ENCODE measurements at regions of chr1 and their contacts with region 1.

Region 1: DNA sequence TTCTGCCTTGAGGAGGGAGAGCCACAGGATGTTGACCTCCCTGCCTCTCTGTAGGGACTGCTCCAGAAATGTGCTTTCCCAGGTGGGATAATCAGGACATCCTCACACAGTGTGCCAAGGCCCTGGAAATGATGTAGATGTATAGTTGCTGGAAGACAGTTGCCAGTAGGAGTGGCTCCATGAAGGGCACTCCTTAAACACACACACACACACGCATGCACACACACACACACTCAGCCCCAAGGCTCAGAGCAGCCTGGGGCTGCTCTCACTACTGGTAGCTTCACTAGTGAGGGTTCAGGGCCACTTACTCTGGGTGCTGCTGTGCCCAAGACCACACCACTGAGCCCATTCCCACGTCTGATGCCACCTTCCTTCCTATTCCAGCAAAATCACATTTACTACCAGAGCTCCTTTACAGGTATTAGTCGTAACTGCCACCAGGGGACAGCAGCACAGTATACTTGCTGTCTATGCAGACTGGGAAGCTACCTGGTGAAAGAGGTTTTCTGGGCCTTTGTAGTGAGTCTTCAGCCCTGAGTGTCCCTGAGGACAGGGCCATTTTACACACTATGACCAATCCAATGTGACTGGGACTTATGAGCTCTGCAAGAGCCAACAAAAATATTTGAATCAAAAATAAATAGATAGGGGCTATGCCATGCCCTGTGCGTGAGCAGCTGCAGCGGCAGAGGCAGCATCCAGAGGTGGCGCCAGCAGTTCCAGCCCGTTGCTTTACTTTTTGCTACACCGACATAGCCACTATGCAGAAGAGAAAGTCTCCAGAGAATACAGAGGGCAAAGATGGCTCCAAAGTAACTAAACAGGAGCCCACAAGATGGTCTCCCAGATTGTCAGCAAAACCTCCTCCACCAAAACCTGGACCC is 15.0 kb downstream of the CRNN start:
- DNase-seq: peak; percentile 44 to 66
- ATAC-seq: peak; percentile 98 to 99
- H3K4me3 ChIP-seq: no peak overlapping the region
- H3K27ac ChIP-seq: no peak overlapping the region
- H3K4me1 ChIP-seq: no peaks in the 10 kb centered on the region; the same call in 2 of the 3 replicates
- CTCF ChIP-seq: peak; percentile 61
- EP300 ChIP-seq: no peak
- POLR2A ChIP-seq: no peak
- RAD21 ChIP-seq: peak; percentile 52 to 63; a peak in 4 of 5 replicates

Region 2: DNA sequence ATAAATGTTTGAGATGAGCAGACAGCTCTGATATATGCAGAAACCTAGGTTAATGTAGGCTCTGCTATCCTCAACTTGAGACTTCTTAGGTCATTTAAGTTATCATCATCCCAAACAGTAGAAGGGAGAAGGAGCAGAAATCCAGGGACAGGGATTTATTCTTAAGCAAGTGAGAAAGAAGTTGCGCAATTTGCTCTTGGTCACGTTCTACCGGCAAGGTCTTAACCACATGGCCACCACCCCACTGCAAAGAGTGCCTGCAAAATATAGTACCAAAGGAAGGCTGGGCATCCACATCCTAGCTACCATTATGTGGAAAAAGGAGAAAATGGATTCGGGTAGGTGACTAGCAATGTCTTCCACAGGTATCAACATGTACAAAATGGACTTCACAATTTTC is 10.2 kb before region 1 on chr1:
- CTCF ChIA-PET with region 1: interaction called, 11 read pairs
- POLR2A ChIA-PET with region 1: no interaction called
- DNase-seq: no peak
- ATAC-seq: no peak
- H3K4me3 ChIP-seq: no peak overlapping the region
- H3K27ac ChIP-seq: no peak overlapping the region
- H3K4me1 ChIP-seq: no peaks in the 10 kb centered on the region
- CTCF ChIP-seq: no peak
- EP300 ChIP-seq: no peak
- POLR2A ChIP-seq: no peak
- RAD21 ChIP-seq: no peak

Region 3: DNA sequence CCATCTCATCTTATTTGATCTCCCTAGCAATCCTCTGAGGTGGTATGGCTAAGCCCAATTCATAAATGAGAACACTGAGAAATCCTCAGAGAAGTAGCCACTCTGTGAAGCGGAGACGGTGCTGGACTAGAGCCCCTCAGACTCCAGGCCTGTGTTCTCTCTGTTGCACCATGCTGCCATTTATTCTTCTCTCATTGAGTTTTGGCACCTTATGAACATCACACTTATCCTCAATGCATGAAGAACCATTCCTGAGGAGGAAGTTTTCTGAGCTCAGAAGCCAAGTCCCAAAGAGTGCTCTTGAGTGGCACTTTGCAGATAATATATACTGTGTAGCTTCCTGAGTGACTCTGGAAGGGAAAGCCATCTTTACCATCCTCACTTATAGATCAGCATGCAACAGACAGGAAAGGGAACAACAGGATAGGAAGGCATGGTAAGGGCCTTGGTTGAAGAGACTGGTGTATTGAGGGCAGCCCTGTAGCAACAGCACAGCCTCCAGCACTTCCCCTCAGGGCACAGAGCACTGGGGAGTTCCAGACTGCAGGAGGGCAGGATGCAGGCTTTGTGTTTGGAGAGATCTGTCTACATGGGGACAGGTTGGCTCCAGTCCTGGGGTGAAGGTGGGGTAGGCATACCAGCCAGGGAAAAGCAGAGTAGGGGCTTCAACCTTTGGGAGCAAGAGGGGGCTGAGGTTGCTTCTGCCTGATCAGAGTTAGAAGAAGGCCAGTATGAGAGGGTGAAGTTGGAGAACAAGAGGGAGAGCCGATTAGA is 16.6 kb after region 1 on chr1:
- CTCF ChIA-PET with region 1: interaction called, 16 read pairs
- POLR2A ChIA-PET with region 1: no interaction called
- DNase-seq: no peak
- ATAC-seq: no peak
- H3K4me3 ChIP-seq: no peak overlapping the region
- H3K27ac ChIP-seq: no peak overlapping the region
- H3K4me1 ChIP-seq: no peaks in the 10 kb centered on the region
- CTCF ChIP-seq: no peak
- EP300 ChIP-seq: no peak
- POLR2A ChIP-seq: no peak
- RAD21 ChIP-seq: no peak

Region 4: DNA sequence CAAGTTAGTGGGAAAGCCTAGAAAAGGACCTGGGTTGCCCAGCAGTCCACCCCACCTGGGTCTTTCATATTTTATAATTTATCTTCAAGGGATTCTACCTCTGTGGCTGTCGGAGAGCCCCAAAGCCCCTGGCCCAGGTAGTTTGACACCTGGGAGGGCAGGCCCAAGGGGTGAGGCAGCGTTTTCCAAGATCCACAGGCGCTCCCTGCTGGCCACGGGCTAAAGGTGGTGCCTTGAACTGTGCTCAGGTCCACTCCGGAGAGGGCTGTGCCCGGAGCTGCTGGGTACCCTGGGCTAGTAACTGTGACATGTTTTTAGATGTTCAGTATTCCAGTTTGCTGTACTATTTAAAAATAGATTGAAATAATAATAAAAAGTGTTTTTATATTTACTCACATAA is 52.2 kb after region 1 on chr1:
- CTCF ChIA-PET with region 1: interaction called, 11 read pairs
- POLR2A ChIA-PET with region 1: no interaction called
- DNase-seq: no peak
- ATAC-seq: peak; percentile 70 to 77; a peak in 4 of 6 replicates
- H3K4me3 ChIP-seq: no peak overlapping the region
- H3K27ac ChIP-seq: no peak overlapping the region
- H3K4me1 ChIP-seq: no peaks in the 10 kb centered on the region
- CTCF ChIP-seq: no peak
- EP300 ChIP-seq: no peak
- POLR2A ChIP-seq: no peak
- RAD21 ChIP-seq: 0 out of 5 replicates have a peak, but pooled peaks of 1 of the 2 experiments have one; percentile 16

Region 5: DNA sequence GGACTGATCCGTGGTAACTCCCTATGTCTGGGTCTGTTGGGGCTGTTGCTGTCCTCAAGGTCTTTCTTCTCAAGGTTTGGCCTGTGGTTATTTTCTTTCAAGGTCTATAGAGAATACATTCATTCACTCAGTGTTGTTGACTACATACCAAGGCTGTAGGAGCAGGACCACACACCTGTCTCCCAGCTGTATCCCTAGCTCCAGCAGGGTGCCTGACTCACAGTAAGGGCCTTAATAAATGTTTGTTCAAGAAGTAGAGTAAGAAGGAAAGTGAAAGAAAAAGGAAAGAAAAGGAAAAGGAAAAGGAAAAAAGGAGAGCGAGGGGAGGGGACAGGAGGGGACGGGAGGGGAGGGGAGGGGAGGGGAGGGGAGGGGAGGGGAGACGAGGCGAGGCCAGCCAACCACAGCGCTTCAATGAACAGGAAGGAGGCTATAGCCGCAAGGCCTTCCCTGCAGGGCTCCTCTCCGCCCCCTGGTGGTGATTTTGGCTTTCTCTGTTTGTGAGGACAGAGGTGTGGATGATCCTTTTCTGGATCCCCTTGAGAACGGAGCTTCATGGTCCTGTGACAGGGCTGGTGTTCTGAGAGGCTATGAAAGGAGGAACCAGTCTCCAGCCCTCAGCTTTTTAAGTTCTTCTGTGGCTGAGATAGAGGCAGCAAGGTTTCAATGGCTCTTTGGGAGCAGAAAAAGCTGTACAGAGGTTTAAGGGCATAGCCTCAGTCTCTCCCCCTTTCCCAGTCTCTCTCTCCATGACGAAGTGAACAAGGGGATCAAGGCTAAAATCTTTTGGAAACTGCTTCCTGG is 80.9 kb after region 1 on chr1:
- CTCF ChIA-PET with region 1: no interaction called
- POLR2A ChIA-PET with region 1: no interaction called
- DNase-seq: peak; percentile 61 to 83
- ATAC-seq: peak; percentile 92 to 99
- H3K4me3 ChIP-seq: no peak overlapping the region
- H3K27ac ChIP-seq: no peak overlapping the region
- H3K4me1 ChIP-seq: no peaks in the 10 kb centered on the region
- CTCF ChIP-seq: peak; percentile 42
- EP300 ChIP-seq: no peak
- POLR2A ChIP-seq: no peak
- RAD21 ChIP-seq: peak in 1 of 2 experiments; percentile 18; a peak in 1 of 5 replicates

Region 6: GRCh38 chr1:152630632-152631031 is 231.6 kb after region 1 on chr1:
- CTCF ChIA-PET with region 1: no interaction called
- POLR2A ChIA-PET with region 1: no interaction called
- DNase-seq: no peak
- ATAC-seq: no peak
- H3K4me3 ChIP-seq: no peak overlapping the region
- H3K27ac ChIP-seq: no peak overlapping the region
- H3K4me1 ChIP-seq: no peaks in the 10 kb centered on the region
- CTCF ChIP-seq: no peak
- EP300 ChIP-seq: no peak
- POLR2A ChIP-seq: no peak
- RAD21 ChIP-seq: no peak

Measured in A549 (cell line).